GM10248 (cell line): ENCODE measurements at regions of chr1 and their contacts with region 1.

Region 1: GRCh38 chr1:150051089-150051373 is 16.5 kb upstream of the VPS45 start:
- DNase-seq: no peak
- CTCF ChIP-seq: no peak

Region 2: GRCh38 chr1:149927503-149928387 is 123.3 kb before region 1 on chr1 and contains the start of gene SF3B4:
- CTCF ChIA-PET with region 1: no interaction called
- POLR2A ChIA-PET with region 1: no interaction called
- DNase-seq: peak; percentile 94
- CTCF ChIP-seq: peak; percentile 5

Region 3: DNA sequence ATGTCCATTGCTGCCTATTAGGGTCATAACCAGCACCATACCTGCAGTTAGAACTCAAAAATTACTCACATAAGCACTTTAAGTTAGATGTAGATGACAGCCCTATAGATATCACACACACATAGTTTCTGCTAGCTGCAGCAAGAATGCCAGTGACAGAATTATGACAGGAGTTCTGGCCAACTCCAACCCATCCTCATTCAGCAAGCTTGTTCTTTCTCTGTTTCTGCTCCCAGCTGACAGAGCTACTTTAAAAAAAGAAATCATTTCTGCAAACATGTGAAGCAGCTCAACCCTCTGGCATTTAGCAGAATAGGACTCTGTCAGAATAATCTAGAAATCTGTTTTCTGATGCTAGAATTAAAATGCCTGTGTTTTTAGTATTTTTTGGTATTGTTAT is 16.7 kb before region 1 on chr1:
- CTCF ChIA-PET with region 1: interaction called, 12 read pairs
- POLR2A ChIA-PET with region 1: no interaction called
- DNase-seq: no peak
- CTCF ChIP-seq: no peak

Region 4: DNA sequence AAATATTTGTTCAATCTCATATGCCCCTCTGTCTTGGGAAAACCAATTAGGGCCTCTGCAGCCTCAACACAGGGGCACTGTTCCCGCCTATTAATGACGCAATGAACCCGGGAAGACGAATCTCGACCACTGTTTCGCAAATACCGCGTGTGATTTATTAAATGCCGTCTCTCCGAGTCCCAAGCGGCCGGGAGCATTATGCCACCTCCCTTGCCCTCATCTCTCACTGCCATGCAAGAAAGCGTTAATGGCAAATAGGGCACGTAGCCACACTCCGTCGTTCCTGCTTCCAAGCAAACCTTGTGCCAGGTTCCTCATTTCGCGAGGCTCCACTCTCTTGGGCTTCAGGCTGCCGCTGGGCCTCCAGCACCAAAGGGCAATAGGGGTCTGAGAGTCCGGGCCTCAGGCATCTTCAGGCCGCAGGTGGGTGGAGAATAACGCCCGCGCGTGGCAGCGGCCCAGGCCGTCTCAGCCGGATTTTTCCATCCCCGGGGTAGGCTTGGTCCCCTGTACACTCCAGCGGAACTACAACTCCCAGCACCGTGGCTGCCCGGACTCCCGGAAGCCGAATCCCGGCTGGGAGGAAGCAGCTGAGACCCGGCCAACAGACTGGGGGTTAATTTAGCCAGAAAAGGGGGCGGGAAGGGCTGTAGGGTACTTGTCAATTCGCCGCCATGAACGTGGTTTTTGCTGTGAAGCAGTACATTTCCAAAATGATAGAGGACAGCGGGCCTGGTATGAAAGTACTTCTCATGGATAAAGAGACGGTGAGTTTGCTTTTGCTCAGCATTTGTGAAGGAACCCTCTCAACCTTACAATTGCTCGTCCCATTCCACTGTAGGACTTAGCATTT is 16.4 kb after region 1 on chr1 and contains the start of gene VPS45:
- CTCF ChIA-PET with region 1: interaction called, 11 read pairs
- POLR2A ChIA-PET with region 1: no interaction called
- DNase-seq: peak; percentile 88
- CTCF ChIP-seq: no peak

Region 5: GRCh38 chr1:150083907-150084306 is 32.9 kb after region 1 on chr1:
- CTCF ChIA-PET with region 1: no interaction called
- POLR2A ChIA-PET with region 1: no interaction called
- DNase-seq: no peak
- CTCF ChIP-seq: no peak

Region 6: GRCh38 chr1:150194381-150195031 is 143.5 kb after region 1 on chr1:
- CTCF ChIA-PET with region 1: no interaction called
- POLR2A ChIA-PET with region 1: no interaction called
- DNase-seq: no peak
- CTCF ChIP-seq: no peak

Region 7: GRCh38 chr1:150221552-150221951 is 170.5 kb after region 1 on chr1:
- CTCF ChIA-PET with region 1: no interaction called
- POLR2A ChIA-PET with region 1: no interaction called
- DNase-seq: no peak
- CTCF ChIP-seq: peak; percentile 43